Aorta (tissue), 5 donors: ENCODE measurements at regions of chr5 and their contacts with region 1.

Region 1: DNA sequence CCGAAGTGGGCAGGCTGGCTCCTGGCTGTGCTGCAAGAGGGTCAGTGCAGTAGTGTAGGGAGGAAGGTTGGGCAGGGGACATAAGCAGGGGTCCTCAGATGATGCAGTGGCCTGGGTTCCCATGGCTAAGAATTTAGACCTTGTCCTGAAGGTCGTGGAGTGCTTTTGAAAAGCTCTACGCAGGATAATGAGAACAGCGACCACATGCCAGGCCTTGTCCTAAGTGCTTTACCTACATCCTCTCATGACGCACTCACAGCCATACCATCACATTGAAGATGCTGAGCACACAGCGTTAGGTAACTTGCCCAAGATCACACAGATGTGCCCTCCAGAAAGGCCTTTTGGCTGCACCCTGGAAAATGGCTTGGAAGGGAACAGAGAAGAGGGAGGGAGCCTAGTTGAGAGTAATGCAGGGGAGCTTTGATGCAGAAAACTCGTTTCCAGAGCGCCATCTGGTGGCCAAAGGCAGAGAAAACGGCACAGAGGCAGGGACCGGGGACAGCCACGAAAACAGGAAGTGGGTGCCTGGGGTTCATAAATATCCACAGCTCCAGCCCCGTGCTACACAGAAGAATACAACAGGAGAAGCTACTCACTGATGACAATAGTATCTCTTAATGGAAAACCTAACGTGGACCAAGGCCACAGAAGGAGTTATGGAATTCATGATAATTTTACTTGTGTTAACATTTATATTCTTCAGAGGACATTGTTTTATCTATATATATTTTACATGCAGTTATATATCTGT is 2.6 kb upstream of the PCDH12 start:
- DNase-seq: peak; percentile 95
- ATAC-seq: peak; percentile 89
- H3K4me3 ChIP-seq: no peak overlapping the region
- H3K27ac ChIP-seq: no peak overlapping the region
- H3K4me1 ChIP-seq: no peaks in the 10 kb centered on the region
- H3K27me3 ChIP-seq: no peaks in the 10 kb centered on the region

Region 2: DNA sequence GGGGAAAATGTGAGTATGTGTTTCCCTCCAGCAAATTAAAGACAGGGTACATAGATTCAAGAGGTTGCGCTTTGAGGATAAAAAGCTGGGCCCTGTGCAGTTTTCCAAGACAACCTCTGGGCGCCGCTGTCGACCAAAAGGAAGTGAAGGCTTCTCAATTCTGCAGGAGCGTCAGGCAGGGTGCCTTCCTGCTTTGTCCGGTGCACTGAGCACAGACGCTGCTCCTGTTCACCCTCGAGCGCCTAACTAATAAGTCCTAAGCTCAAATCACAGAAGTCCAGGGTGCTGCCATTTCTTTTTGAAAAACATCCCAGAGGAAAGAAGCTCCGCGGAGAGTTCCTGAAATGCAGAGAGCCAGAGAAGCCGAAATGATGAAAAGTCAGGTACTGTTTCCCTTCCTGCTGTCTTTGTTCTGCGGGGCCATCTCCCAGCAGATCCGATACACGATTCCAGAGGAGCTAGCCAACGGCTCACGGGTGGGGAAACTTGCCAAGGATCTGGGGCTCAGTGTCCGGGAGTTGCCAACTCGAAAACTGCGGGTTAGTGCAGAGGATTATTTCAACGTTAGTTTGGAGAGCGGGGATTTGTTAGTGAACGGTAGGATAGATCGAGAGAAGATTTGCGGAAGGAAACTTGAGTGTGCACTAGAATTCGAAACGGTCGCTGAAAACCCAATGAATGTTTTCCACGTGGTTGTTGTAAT is 610.6 kb before region 1 on chr5 and contains the start of gene PCDHGB1:
- intact Hi-C with region 1: no loop called
- DNase-seq: peak in 1 of 2 donors; percentile 62
- ATAC-seq: no peak
- H3K4me3 ChIP-seq: no peak within 1 kb of the TSS
- H3K27ac ChIP-seq: no peak within 1 kb of the TSS
- H3K4me1 ChIP-seq: no peaks in the 10 kb centered on the region
- H3K27me3 ChIP-seq: no peaks in the 10 kb centered on the region
- total RNA-seq, gene PCDHGB1: 3.5 to 6.5 TPM

Region 3: DNA sequence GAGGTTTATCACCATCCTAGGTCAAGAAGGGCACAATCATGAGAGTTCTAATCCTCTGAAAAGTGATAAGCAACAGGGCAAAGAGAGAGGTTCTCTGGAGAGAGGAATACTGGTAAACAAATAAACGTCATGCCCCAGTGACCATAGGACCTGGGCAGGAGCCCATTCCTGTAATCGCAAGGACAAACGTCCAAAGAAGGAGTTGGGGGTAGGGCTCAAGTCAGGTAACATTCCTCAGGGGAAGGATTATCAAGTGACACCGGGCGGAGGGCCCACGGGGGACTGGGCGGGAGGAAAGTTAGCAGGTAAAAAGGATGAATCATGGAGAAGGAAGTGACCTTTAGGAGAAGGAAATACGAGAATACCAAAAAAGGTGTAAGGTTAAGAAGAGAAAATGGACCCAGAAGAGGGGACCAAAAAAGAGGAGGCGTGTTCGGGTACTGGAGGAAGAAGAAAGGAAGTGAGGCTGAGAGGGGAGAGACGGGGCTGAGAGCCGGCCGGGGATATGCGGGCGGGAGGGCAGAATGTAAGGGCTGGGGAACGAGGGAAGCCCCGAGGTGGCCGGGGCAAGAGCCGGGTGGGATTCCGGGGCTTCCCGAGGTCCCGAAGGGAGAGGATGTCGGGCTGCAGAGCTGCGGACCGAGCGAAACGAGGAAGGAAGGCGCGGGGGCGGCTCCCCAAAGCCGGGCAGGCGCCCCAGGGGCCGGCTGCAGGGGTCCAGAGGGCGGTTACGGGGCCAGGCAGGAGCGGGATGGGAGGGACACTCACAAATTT is 342.4 kb before region 1 on chr5:
- intact Hi-C with region 1: no loop called
- DNase-seq: peak in 1 of 2 donors; percentile 70
- ATAC-seq: peak; percentile 69
- H3K4me3 ChIP-seq: peak overlapping the region; percentile 97 to 98
- H3K27ac ChIP-seq: peak overlapping the region; percentile 74 to 91
- H3K4me1 ChIP-seq: peaks cover 0 to 8% of the 10 kb centered on the region in 2 donors
- H3K27me3 ChIP-seq: no peaks in the 10 kb centered on the region

Region 4: GRCh38 chr5:141691867-141692532 is 268.6 kb before region 1 on chr5:
- intact Hi-C with region 1: loop called (anchors 2 kb)
- DNase-seq: peak; percentile 89 to 94
- ATAC-seq: peak; percentile 94
- H3K4me3 ChIP-seq: no peak overlapping the region
- H3K27ac ChIP-seq: no peak overlapping the region
- H3K4me1 ChIP-seq: no peaks in the 10 kb centered on the region
- H3K27me3 ChIP-seq: no peaks in the 10 kb centered on the region

Region 5: GRCh38 chr5:141889282-141889871 is 71.2 kb before region 1 on chr5:
- intact Hi-C with region 1: loop called in 1 of 2 experiments (anchors 2 kb)
- DNase-seq: no peak
- ATAC-seq: no peak
- H3K4me3 ChIP-seq: no peak overlapping the region
- H3K27ac ChIP-seq: no peak overlapping the region
- H3K4me1 ChIP-seq: no peaks in the 10 kb centered on the region
- H3K27me3 ChIP-seq: no peaks in the 10 kb centered on the region